ENCODE measurements at regions of chr1 and their contacts with region 1.

Region 1: DNA sequence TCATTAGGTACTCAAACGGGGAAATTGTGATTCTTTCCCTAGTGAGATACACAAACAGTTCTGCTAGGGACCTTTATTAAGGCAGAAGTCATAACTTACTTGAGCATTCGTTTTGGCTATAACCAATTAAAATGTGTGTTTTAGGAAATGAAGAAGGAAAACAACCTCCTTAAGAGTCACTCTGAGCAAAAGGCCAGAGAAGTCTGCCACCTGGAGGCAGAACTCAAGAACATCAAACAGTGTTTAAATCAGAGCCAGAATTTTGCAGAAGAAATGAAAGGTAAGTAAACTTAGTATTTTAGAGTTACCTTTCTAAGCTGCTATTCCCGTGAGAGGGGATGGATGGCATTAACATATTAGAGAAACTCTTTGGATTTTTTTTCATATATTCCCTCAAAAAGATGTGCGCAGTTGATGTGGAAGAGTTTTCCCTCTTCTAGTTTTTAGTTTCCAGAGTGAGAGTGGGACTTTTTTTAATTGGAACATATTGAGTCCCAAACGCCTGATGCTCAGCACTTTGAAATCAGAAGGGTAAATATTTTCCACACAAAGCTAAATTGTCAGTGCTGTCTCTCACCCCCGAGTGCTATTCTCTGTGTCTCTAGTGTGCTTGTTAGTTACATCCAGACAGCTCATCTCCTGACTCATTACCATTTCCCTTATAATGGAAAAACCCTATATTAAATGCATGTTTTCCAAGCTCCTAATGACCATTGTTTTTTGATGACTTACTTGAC is 34.9 kb downstream of the CENPF start:
- DNase-seq: no peak
- ATAC-seq: peak in 1 of 2 donors; percentile 47
- H3K4me3 ChIP-seq: no peak overlapping the region
- H3K27ac ChIP-seq: no peak overlapping the region
- H3K4me1 ChIP-seq: no peaks in the 10 kb centered on the region
- H3K27me3 ChIP-seq: no peaks in the 10 kb centered on the region
- CTCF ChIP-seq: peak; percentile 10 to 61 (median 30)
- POLR2A ChIP-seq: no peak

Region 2: GRCh38 chr1:214515544-214516429 is 122.1 kb before region 1 on chr1:
- in situ Hi-C with region 1: no loop called
- intact Hi-C with region 1: no loop called
- DNase-seq: no peak
- ATAC-seq: no peak
- H3K4me3 ChIP-seq: no peak overlapping the region
- H3K27ac ChIP-seq: peak overlapping the region in 3 of 4 donors; percentile 38 to 59 (median 50)
- H3K4me1 ChIP-seq: peaks cover 85 to 92% of the 10 kb centered on the region in 2 donors
- H3K27me3 ChIP-seq: no peaks in the 10 kb centered on the region
- CTCF ChIP-seq: no peak
- POLR2A ChIP-seq: no peak

Region 3: GRCh38 chr1:215526553-215527151 is 888.8 kb after region 1 on chr1:
- in situ Hi-C with region 1: loop called in 2 of 4 experiments (anchors 10 kb)
- intact Hi-C with region 1: no loop called
- DNase-seq: no peak
- ATAC-seq: no peak
- H3K4me3 ChIP-seq: no peak overlapping the region
- H3K27ac ChIP-seq: no peak overlapping the region
- H3K4me1 ChIP-seq: no peaks in the 10 kb centered on the region
- H3K27me3 ChIP-seq: no peaks in the 10 kb centered on the region
- CTCF ChIP-seq: peak; percentile 53 to 70 (median 57)
- POLR2A ChIP-seq: no peak

Measured in gastrocnemius medialis (tissue), 4 donors.